T-cell (primary cell): ENCODE measurements at regions of chrX and their contacts with region 1.

Region 1: DNA sequence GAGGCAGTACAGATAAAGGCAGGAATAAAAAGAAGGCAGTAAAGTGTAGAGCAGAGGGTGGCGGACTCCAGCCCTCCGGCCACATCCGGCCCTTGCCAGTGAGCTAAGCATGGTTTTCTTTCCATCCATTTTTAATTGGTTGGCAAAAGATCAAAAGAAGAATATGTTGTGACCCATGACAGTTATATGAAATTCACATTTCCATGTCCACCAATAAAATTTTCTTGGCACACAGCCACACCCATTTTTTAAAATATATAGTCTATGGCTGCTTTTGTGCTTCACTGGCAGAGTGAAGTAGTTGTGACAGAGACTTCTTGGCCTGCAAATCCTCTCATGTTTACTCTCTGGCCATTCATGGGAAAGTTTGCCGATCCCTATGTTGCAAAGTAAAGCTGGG is 29.8 kb downstream of the SLC9A6 start:
- DNase-seq: no peak
- ATAC-seq: no peak
- H3K4me3 ChIP-seq: no peak overlapping the region
- H3K4me3 Mint-ChIP-seq: no peak overlapping the region
- H3K27ac ChIP-seq: no peak overlapping the region
- H3K27ac Mint-ChIP-seq: no peak overlapping the region
- H3K4me1 ChIP-seq: no peaks in the 10 kb centered on the region
- H3K4me1 Mint-ChIP-seq: no peaks in the 10 kb centered on the region
- H3K27me3 ChIP-seq: no peaks in the 10 kb centered on the region
- H3K27me3 Mint-ChIP-seq: peaks cover 0 to 7% of the 10 kb centered on the region in 2 donors

Region 2: GRCh38 chrX:136076942-136077341 is 61.9 kb after region 1 on chrX:
- CTCF ChIA-PET with region 1: no interaction called
- POLR2A ChIA-PET with region 1: interaction called in 1 of 2 experiments, 10 read pairs
- DNase-seq: no peak
- ATAC-seq: no peak
- H3K4me3 ChIP-seq: no peak overlapping the region
- H3K4me3 Mint-ChIP-seq: no peak overlapping the region
- H3K27ac ChIP-seq: no peak overlapping the region
- H3K27ac Mint-ChIP-seq: no peak overlapping the region
- H3K4me1 ChIP-seq: no peaks in the 10 kb centered on the region
- H3K4me1 Mint-ChIP-seq: peaks cover 0 to 5% (median 3%) of the 10 kb centered on the region in 3 donors
- H3K27me3 ChIP-seq: no peaks in the 10 kb centered on the region
- H3K27me3 Mint-ChIP-seq: peaks cover 10 to 39% of the 10 kb centered on the region in 2 donors

Region 3: GRCh38 chrX:136097871-136098805 is 83.1 kb after region 1 on chrX:
- CTCF ChIA-PET with region 1: no interaction called
- POLR2A ChIA-PET with region 1: no interaction called
- DNase-seq: no peak
- ATAC-seq: no peak
- H3K4me3 ChIP-seq: no peak overlapping the region
- H3K4me3 Mint-ChIP-seq: no peak overlapping the region
- H3K27ac ChIP-seq: no peak overlapping the region
- H3K27ac Mint-ChIP-seq: no peak overlapping the region
- H3K4me1 ChIP-seq: no peaks in the 10 kb centered on the region
- H3K4me1 Mint-ChIP-seq: no peaks in the 10 kb centered on the region
- H3K27me3 ChIP-seq: no peaks in the 10 kb centered on the region
- H3K27me3 Mint-ChIP-seq: peaks cover 0 to 12% of the 10 kb centered on the region in 2 donors

Region 4: GRCh38 chrX:136143711-136144110 is 128.7 kb after region 1 on chrX:
- CTCF ChIA-PET with region 1: no interaction called
- POLR2A ChIA-PET with region 1: interaction called in 1 of 2 experiments, 14 read pairs
- DNase-seq: peak in 3 of 35 experiments; percentile 7 to 35 (median 25)
- ATAC-seq: peak in 3 of 4 experiments; percentile 19 to 40 (median 23)
- H3K4me3 ChIP-seq: peak overlapping the region in 1 of 2 donors; percentile 15
- H3K4me3 Mint-ChIP-seq: peak overlapping the region; percentile 28 to 87 (median 71)
- H3K27ac ChIP-seq: peak overlapping the region; percentile 47
- H3K27ac Mint-ChIP-seq: peak overlapping the region; percentile 80 to 87
- H3K4me1 ChIP-seq: peaks cover 0 to 21% of the 10 kb centered on the region in 2 experiments
- H3K4me1 Mint-ChIP-seq: peaks cover 23 to 41% (median 34%) of the 10 kb centered on the region in 3 donors
- H3K27me3 ChIP-seq: no peaks in the 10 kb centered on the region
- H3K27me3 Mint-ChIP-seq: peaks cover 0 to 17% of the 10 kb centered on the region in 2 donors